Common myeloid progenitor, CD34-positive (primary cell): ENCODE measurements at regions of chr2 and their contacts with region 1.

Region 1: GRCh38 chr2:60652832-60653340 is 99.4 kb upstream of the BCL11A start:
- DNase-seq: no peak
- H3K4me3 ChIP-seq: no peak overlapping the region
- H3K27ac ChIP-seq: no peak overlapping the region
- H3K4me1 ChIP-seq: no peaks in the 10 kb centered on the region
- H3K27me3 ChIP-seq: no peaks in the 10 kb centered on the region

Region 2: GRCh38 chr2:60560734-60561644 is 91.9 kb before region 1 on chr2:
- CTCF ChIA-PET with region 1: no interaction called
- POLR2A ChIA-PET with region 1: interaction called, 14 read pairs
- DNase-seq: peak in 2 of 3 donors; percentile 76
- H3K4me3 ChIP-seq: no peak overlapping the region
- H3K27ac ChIP-seq: no peak overlapping the region
- H3K4me1 ChIP-seq: peaks cover 6 to 46% (median 24%) of the 10 kb centered on the region in 4 experiments
- H3K27me3 ChIP-seq: no peaks in the 10 kb centered on the region